Calu3 (cell line): ENCODE measurements at regions of chr12 and their contacts with region 1.

Region 1: DNA sequence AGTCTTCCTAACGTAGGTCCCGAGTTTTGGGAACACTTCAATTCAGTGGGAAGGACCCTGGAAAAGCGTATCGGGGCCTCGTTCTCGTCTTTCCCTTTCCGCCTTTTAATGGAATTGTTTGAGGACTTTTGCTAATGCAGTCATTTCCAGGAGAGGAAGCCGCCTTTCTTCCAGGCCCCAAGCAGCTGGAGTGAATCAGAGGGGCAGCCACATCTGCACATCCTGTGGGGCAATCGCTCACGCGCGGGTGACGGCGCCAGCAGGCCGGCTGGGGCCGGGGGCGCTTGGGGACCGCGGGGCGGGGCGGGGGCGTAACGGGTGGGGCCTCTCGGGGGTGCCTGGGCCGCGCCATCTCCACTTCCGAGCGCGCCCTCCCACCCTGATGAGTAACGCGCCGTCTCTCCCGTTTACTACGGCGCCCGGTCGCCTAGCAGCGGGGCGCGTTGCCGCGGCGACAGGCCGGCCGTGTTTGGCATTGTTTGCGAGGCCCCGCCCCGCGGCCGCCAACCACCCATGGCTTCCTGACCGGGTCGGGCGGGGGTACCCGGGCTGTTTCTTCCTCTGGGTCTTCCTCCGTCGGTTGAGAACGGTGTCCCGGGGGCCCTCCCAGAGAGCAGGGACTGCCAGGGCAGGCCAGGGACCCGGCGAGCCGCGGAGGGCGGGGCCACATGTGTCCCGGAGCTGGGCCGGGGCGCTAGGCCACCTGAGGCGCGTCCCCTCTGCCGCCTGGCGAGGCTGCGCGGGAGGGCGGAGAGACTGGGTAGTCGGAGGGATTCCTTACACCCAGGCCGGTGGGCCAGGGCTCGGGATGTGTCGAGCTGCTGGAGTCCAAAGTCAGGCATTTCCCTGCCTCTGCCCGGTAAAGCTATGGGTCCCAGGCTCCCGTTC is 2.3 kb downstream of the GSG1 start:
- DNase-seq: peak; percentile 94
- H3K4me3 Mint-ChIP-seq: peak overlapping the region; percentile 77
- H3K27ac Mint-ChIP-seq: peak overlapping the region; percentile 96
- H3K4me1 Mint-ChIP-seq: peaks cover 58% of the 10 kb centered on the region
- H3K27me3 Mint-ChIP-seq: no peaks in the 10 kb centered on the region
- CTCF ChIP-seq: no peak

Region 2: GRCh38 chr12:12999959-13000615 is 101.0 kb before region 1 on chr12 and contains the start of gene HEBP1:
- CTCF ChIA-PET with region 1: interaction called, 3 read pairs
- intact Hi-C with region 1: loop called (anchors 5 kb)
- DNase-seq: peak; percentile 97
- H3K4me3 Mint-ChIP-seq: peak within 1 kb of the TSS; percentile 93
- H3K27ac Mint-ChIP-seq: peak within 1 kb of the TSS; percentile 62
- H3K4me1 Mint-ChIP-seq: peaks cover 23% of the 10 kb centered on the region
- H3K27me3 Mint-ChIP-seq: peaks cover 46% of the 10 kb centered on the region
- CTCF ChIP-seq: no peak
- total RNA-seq, gene HEBP1: 10.6 and 10.9 TPM in 2 replicates

Region 3: DNA sequence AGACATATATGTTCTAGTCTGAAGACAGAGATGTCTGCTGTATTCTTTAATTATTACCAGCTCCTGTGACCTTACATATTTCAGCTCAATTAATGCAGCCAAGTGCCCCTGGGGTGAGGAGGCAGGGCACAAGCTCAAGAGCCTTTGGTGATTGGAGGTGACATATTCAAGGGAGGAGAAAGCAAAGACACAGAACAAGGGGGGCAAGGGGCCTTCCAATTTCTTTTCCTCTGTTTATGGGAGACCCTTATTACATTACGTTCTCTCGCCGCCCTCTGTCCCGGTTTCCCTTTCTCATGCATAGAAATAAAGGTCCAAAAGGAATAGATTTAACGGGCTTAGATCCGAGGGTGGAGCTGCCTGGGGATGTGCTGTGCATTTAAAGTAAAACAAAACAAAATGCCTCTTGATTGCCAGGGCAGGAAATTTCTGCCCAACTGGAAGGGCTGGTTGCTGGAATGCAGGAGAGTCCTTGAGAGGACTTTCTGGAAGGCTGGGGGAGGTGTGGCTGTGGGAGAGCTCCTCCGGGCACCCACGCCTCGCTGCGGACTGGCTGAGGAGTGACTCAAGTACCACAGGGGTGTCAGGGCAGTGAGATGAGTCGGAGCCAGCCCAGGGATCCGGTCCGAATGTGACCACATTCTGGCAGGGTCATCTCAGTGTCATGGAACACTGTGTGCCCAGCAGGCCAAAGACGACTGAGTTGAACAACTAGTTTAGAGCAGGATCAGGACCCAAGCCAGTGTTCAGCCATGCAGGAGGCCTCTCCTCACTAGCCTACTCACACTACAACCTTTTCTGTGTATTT is 34.4 kb after region 1 on chr12:
- CTCF ChIA-PET with region 1: no interaction called
- intact Hi-C with region 1: loop called (anchors 1 kb)
- DNase-seq: peak; percentile 91
- H3K4me3 Mint-ChIP-seq: peak overlapping the region; percentile 65
- H3K27ac Mint-ChIP-seq: peak overlapping the region; percentile 78
- H3K4me1 Mint-ChIP-seq: peaks cover 66% of the 10 kb centered on the region
- H3K27me3 Mint-ChIP-seq: no peaks in the 10 kb centered on the region
- CTCF ChIP-seq: peak; percentile 49

Region 4: DNA sequence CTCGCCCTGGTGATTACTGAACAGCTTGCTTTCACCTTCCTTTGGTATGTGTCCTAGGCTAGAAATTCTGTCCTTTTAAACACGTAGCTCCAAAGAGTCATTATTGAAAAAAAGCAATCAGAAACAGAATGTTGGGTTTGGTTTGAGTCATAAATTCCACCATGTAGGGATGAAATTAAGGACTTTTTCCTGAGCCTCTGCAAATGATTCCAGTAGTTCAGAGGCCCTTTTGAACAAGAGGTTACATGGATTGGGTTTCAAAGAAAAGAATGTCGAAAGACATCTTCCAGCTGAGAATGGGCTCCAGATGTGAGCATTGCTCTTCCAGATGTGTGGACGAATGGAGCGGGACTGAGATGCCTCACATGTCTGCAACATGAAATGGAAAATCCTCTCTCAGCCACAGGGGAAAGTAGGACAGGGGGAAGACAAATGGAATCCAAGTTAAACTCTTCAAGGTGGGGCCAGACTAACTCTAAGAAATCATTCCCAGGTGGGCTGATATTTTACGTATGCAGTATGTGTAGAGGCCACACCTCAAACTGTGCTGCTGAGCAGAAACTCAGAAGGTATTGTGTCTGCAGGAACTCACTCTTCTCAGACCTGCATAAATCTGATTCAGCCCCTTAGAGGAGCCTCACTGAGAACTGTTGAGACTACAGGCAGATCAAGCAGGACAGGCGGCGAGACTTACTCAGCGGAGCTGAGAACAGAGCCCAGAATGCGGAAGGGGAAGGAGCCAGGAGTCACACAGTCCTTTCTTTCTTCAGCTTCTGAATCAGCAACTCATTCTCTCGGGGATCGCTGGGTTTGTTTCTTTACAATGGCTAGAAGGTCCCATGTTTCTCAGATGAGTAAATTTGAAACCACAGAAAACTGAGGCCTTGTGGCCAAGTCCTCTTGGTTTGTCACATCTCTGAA is 72.1 kb after region 1 on chr12:
- CTCF ChIA-PET with region 1: no interaction called
- intact Hi-C with region 1: loop called (anchors 1 kb)
- DNase-seq: peak; percentile 70
- H3K4me3 Mint-ChIP-seq: peak overlapping the region; percentile 25
- H3K27ac Mint-ChIP-seq: peak overlapping the region; percentile 58
- H3K4me1 Mint-ChIP-seq: peaks cover 71% of the 10 kb centered on the region
- H3K27me3 Mint-ChIP-seq: no peaks in the 10 kb centered on the region
- CTCF ChIP-seq: no peak

Region 5: GRCh38 chr12:13196130-13196921 is 95.2 kb after region 1 on chr12 and contains the start of gene EMP1:
- CTCF ChIA-PET with region 1: interaction called, 14 read pairs
- intact Hi-C with region 1: no loop called
- DNase-seq: peak; percentile 88
- H3K4me3 Mint-ChIP-seq: peak within 1 kb of the TSS; percentile 76
- H3K27ac Mint-ChIP-seq: peak within 1 kb of the TSS; percentile 68
- H3K4me1 Mint-ChIP-seq: peaks cover 55% of the 10 kb centered on the region
- H3K27me3 Mint-ChIP-seq: no peaks in the 10 kb centered on the region
- CTCF ChIP-seq: no peak
- total RNA-seq, gene EMP1: 128 and 146 TPM in 2 replicates

Region 6: DNA sequence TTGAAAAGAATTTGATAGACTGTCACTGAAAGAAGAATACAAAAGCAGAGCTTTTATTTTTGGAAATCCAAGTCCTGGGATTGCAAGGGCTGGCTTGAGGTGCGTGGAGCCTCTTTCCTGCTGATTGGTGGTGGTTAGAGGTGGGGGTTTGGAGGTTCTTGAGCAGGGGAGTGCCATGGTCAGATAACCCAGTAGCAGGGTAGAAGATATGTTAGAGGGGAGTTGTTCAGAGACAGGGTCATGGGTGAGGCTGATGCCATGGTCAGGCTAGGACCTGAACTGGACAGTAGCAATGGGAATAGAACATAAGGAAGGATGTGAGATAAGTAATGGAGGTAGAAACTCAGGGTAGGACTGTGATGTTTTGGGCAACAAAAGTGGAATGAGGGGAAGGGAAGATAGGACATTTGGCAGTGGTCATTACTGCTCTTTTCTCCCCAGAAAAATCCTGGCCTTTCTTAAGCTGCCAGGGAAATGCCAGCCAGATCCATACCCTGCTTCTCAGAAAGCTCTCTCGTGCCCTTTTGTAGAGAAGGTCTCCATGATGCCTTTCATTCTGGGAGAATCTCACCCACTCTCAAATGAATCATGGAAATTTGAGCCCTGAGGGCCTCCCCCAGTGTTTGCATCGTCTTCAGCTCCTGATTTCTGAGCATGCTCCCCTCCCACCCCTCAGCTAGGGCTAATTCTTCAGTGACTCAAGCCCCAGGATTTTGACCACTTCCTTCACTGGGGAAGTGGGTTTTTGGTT is 104.9 kb after region 1 on chr12:
- CTCF ChIA-PET with region 1: interaction called, 19 read pairs
- intact Hi-C with region 1: loop called (anchors 1 kb)
- DNase-seq: peak; percentile 66
- H3K4me3 Mint-ChIP-seq: peak overlapping the region; percentile 46
- H3K27ac Mint-ChIP-seq: peak overlapping the region; percentile 77
- H3K4me1 Mint-ChIP-seq: peaks cover 97% of the 10 kb centered on the region
- H3K27me3 Mint-ChIP-seq: no peaks in the 10 kb centered on the region
- CTCF ChIP-seq: no peak

Region 7: GRCh38 chr12:13211859-13212664 is 110.9 kb after region 1 on chr12:
- CTCF ChIA-PET with region 1: interaction called, 11 read pairs
- intact Hi-C with region 1: loop called (anchors 1 kb)
- DNase-seq: peak; percentile 73
- H3K4me3 Mint-ChIP-seq: peak overlapping the region; percentile 1
- H3K27ac Mint-ChIP-seq: peak overlapping the region; percentile 45
- H3K4me1 Mint-ChIP-seq: peaks cover 50% of the 10 kb centered on the region
- H3K27me3 Mint-ChIP-seq: no peaks in the 10 kb centered on the region
- CTCF ChIP-seq: peak; percentile 48

Region 8: DNA sequence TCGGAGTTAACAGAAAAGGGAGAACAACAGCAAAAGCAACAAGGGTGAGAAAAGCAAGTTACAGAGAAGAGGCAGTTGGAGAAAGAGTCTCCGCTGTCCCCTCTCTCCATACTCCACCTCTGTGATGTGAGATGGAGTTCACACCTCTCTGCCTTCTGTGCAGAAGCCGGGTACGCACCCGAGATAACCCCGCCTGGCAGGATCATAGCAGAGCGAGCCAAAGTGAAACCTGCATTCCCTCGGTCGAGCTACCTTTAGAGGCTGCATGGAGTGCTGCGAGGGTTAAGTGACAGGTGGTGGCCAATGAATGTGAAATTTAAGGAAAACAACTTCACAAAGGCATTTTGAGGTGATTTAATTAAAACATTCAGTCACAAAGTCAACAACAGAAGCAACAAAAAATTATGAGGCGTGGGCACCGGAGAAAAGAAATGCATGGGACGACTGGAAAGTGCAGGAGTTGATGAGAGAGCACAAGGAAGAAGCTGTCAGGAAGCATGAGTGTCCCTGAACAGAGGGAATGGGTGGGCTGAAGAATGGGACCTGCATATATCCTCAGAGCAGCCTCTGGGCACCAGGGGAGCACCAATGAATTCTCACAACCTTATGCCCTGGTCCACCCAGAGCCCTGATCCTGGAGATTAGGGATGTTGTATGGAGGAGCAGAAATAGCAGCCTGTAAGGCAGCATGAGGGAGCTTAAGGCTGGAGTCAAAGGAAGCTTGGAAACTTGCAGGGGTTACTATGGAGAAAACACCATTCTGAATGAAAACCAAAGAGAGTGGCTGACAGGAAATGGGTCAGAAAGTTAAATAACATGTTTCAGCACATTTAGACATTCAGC is 303.7 kb after region 1 on chr12:
- CTCF ChIA-PET with region 1: no interaction called
- intact Hi-C with region 1: no loop called
- DNase-seq: peak; percentile 43
- H3K4me3 Mint-ChIP-seq: peak overlapping the region; percentile 69
- H3K27ac Mint-ChIP-seq: peak overlapping the region; percentile 9
- H3K4me1 Mint-ChIP-seq: peaks cover 24% of the 10 kb centered on the region
- H3K27me3 Mint-ChIP-seq: no peaks in the 10 kb centered on the region
- CTCF ChIP-seq: no peak

Region 9: GRCh38 chr12:13504074-13504473 is 402.9 kb after region 1 on chr12:
- CTCF ChIA-PET with region 1: no interaction called
- intact Hi-C with region 1: no loop called
- DNase-seq: no peak
- H3K4me3 Mint-ChIP-seq: no peak overlapping the region
- H3K27ac Mint-ChIP-seq: no peak overlapping the region
- H3K4me1 Mint-ChIP-seq: no peaks in the 10 kb centered on the region
- H3K27me3 Mint-ChIP-seq: no peaks in the 10 kb centered on the region
- CTCF ChIP-seq: no peak